Activated naive CD4-positive, alpha-beta T cell treated with anti-CD3 and anti-CD28 coated beads for 36 hours (primary cell): ENCODE measurements at regions of chr18 and their contacts with region 1.

Region 1: GRCh38 chr18:4096486-4096885 is 358.6 kb downstream of the DLGAP1 start:
- DNase-seq: no peak
- H3K4me3 Mint-ChIP-seq: no peak overlapping the region
- H3K27ac Mint-ChIP-seq: no peak overlapping the region
- H3K4me1 Mint-ChIP-seq: no peaks in the 10 kb centered on the region
- H3K27me3 Mint-ChIP-seq: peaks cover 6% of the 10 kb centered on the region

Region 2: GRCh38 chr18:4106407-4107033 is 10.0 kb after region 1 on chr18:
- CTCF ChIA-PET with region 1: interaction called, 11 read pairs
- intact Hi-C with region 1: no loop called
- DNase-seq: peak; percentile 81
- H3K4me3 Mint-ChIP-seq: no peak overlapping the region
- H3K27ac Mint-ChIP-seq: no peak overlapping the region
- H3K4me1 Mint-ChIP-seq: no peaks in the 10 kb centered on the region
- H3K27me3 Mint-ChIP-seq: peaks cover 4% of the 10 kb centered on the region